ENCODE measurements at regions of chr1 and their contacts with region 1.

Region 1: DNA sequence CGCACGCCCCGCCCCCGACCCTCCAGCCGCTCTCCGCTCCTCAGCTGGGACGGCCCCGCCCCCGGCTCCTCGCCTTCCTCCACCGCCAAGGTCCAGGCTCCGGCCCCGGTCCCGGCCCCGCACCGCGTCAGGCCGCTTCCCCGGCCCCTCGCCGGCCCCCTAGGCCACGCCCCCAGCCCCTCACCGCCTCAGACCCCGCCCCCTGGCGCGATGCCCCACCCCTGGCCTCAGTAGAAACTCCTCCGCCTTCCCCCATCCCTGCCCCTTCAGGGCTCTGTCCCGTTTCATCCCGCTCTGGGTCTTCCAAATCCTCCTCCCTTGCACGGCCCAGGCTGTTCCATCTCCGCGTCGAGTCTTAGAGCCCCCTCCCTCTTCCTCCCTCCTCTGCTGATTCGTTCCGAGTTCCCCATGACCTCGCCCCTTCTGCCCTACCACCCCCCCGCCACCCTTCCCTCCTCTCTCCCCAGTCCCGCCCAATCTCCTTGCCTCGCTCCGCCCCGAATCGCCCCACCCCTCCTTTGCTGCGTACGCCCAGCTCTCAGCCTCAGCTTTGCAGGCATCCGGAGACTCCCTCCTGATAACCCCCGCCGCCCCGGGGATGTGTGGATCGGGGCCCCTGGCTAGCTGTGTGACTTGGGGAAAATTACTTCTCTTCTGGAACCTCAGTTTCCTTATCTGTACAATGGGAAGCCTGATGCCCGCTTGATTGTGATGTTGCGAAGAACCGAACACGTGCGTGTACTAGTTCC is 448 bp upstream of the ASAP3 start:
- DNase-seq: peak; percentile 95 to 97
- ATAC-seq: peak; percentile 92 to 95 (median 93)
- H3K4me3 ChIP-seq: peak overlapping the region in 9 of 10 donors; percentile 88 to 98 (median 96)
- H3K27ac ChIP-seq: peak overlapping the region; percentile 75 to 97 (median 93)
- H3K4me1 ChIP-seq: peaks cover 11 to 47% (median 34%) of the 10 kb centered on the region in 9 donors
- H3K27me3 ChIP-seq: peaks cover 0 to 50% (median 0%) of the 10 kb centered on the region in 7 donors
- CTCF ChIP-seq: no peak

Region 2: GRCh38 chr1:23344111-23344986 is 140.1 kb before region 1 on chr1 and contains the start of gene HNRNPR:
- intact Hi-C with region 1: loop called in 1 of 10 experiments (anchors 5 kb)
- DNase-seq: peak; percentile 100
- ATAC-seq: peak; percentile 96 to 99 (median 98)
- H3K4me3 ChIP-seq: peak within 1 kb of the TSS; percentile 87 to 99 (median 90)
- H3K27ac ChIP-seq: peak within 1 kb of the TSS; percentile 92 to 98 (median 96)
- H3K4me1 ChIP-seq: peaks cover 2 to 49% (median 42%) of the 10 kb centered on the region in 9 donors
- H3K27me3 ChIP-seq: no peaks in the 10 kb centered on the region
- CTCF ChIP-seq: peak in 6 of 9 donors; percentile 14 to 35 (median 22)
- total RNA-seq, gene HNRNPR: 56.7 to 72.7 (median 66.4) TPM

Region 3: GRCh38 chr1:23422241-23423030 is 62.0 kb before region 1 on chr1:
- intact Hi-C with region 1: loop called in 2 of 10 experiments (anchors 5 kb)
- DNase-seq: peak; percentile 78 to 80
- ATAC-seq: peak; percentile 31 to 72 (median 58)
- H3K4me3 ChIP-seq: peak overlapping the region in 7 of 10 donors; percentile 8 to 80 (median 25)
- H3K27ac ChIP-seq: peak overlapping the region; percentile 8 to 92 (median 88)
- H3K4me1 ChIP-seq: peaks cover 10 to 59% (median 39%) of the 10 kb centered on the region in 9 donors
- H3K27me3 ChIP-seq: peaks cover 0 to 34% (median 0%) of the 10 kb centered on the region in 7 donors
- CTCF ChIP-seq: no peak

Measured in heart right ventricle (tissue), 16 donors.